ENCODE measurements at regions of chr17 and their contacts with region 1.

Region 1: DNA sequence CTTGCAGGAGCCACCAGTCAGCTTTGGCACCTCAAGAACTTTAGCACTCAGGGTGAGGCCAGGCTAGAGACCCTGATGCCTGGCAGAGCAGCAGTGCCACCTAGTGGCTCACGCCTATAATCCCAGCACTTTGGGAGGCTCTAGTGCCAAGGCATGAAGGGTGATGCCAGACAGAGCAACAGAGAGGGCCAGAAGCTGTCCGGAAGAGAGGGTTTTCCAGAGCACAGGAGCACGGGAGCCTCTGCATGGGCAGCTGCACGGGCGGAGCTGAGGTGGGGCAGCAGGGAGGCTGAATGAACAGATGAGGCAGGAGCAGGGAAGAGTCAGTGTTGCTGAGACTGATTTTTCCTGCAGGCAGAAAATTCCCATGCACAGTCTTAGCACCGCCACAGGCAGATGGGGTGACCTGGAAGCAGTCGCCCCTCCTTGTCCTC is 38.9 kb downstream of the MYH3 start:
- DNase-seq: peak; percentile 30 to 83 (median 66)
- H3K4me3 ChIP-seq: peak overlapping the region in 18 of 59 donors; percentile 2 to 43 (median 30)
- H3K27ac ChIP-seq: peak overlapping the region in 3 of 59 donors; percentile 6 to 49 (median 36)
- H3K27me3 ChIP-seq: no peaks in the 10 kb centered on the region
- CTCF ChIP-seq: peak; percentile 39 to 96 (median 84)

Region 2: GRCh38 chr17:10295728-10296343 is 322.4 kb before region 1 on chr17:
- intact Hi-C with region 1: loop called in 1 of 2 experiments (anchors 1 kb)
- DNase-seq: peak in 7 of 10 donors; percentile 47 to 68 (median 60)
- H3K4me3 ChIP-seq: no peak overlapping the region
- H3K27ac ChIP-seq: no peak overlapping the region
- H3K27me3 ChIP-seq: peaks cover 0 to 9% (median 0%) of the 10 kb centered on the region in 45 donors
- CTCF ChIP-seq: peak; percentile 19 to 83 (median 70)

Region 3: GRCh38 chr17:10327640-10328039 is 290.6 kb before region 1 on chr17:
- intact Hi-C with region 1: loop called (anchors 2 to 5 kb)
- DNase-seq: peak; percentile 28 to 92 (median 81)
- H3K4me3 ChIP-seq: no peak overlapping the region
- H3K27ac ChIP-seq: no peak overlapping the region
- H3K27me3 ChIP-seq: peaks cover 0 to 5% (median 0%) of the 10 kb centered on the region in 45 donors
- CTCF ChIP-seq: peak; percentile 81 to 97 (median 92)

Region 4: DNA sequence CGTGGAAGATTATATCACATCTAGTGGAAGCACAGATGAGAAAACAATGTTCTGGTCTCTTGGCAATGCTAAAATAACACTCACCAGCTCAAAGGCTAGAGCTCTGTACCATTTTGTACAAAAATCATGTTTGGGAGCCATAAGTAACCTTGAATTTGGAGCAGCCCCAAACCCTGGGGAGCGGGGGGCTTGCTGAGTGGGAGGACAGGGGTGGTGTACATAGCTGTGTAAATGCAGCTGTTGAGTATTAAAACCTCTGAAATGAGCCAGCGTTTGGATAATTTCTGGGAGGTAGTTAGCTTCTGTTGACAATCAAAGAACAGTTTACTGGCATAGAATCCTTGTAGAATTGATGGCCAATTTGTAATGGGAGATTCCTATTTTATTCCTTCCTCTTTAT is 200.8 kb before region 1 on chr17:
- intact Hi-C with region 1: no loop called
- DNase-seq: no peak
- H3K4me3 ChIP-seq: no peak overlapping the region
- H3K27ac ChIP-seq: no peak overlapping the region
- H3K27me3 ChIP-seq: peaks cover 0 to 8% (median 0%) of the 10 kb centered on the region in 45 donors
- CTCF ChIP-seq: no peak

Measured in dorsolateral prefrontal cortex (tissue), 120 donors.